HCT116 (cell line): ENCODE measurements at regions of chr17 and their contacts with region 1.

Region 1: GRCh38 chr17:71237903-71238538 is 882.8 kb upstream of the SOX9 start:
- DNase-seq: peak; percentile 57
- ATAC-seq: peak; percentile 96
- H3K4me3 ChIP-seq: no peak overlapping the region
- H3K27ac ChIP-seq: no peak overlapping the region
- H3K4me1 ChIP-seq: no peaks in the 10 kb centered on the region
- H3K27me3 ChIP-seq: no peaks in the 10 kb centered on the region
- CTCF ChIP-seq: peak; percentile 38 to 66 (median 64)
- POLR2A ChIP-seq: no peak
- RAD21 ChIP-seq: peak; percentile 89

Region 2: DNA sequence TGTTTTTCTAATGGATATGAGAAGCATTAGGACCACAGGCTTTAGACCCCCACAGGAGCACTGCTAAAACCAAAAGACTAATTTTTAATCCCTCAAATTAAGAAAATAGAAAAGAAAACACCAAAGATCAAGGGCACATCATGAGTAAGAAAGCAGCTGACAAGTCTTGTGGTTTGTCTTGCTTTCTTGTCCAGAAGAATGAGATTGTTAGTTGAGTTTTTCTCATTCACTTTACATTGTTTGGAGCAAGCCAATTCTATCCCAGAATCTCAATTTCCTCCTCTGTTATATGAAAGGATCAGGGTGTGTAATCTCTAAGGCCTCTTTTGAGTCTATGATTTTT is 169.6 kb before region 1 on chr17:
- CTCF ChIA-PET with region 1: no interaction called
- POLR2A ChIA-PET with region 1: no interaction called
- RAD21 ChIA-PET with region 1: no interaction called
- intact Hi-C with region 1: no loop called
- DNase-seq: no peak
- ATAC-seq: no peak
- H3K4me3 ChIP-seq: no peak overlapping the region
- H3K27ac ChIP-seq: no peak overlapping the region
- H3K4me1 ChIP-seq: peaks cover 6 to 22% of the 10 kb centered on the region in 2 experiments; a peak in 3 of 4 replicates
- H3K27me3 ChIP-seq: no peaks in the 10 kb centered on the region
- CTCF ChIP-seq: no peak
- POLR2A ChIP-seq: no peak
- RAD21 ChIP-seq: no peak

Region 3: DNA sequence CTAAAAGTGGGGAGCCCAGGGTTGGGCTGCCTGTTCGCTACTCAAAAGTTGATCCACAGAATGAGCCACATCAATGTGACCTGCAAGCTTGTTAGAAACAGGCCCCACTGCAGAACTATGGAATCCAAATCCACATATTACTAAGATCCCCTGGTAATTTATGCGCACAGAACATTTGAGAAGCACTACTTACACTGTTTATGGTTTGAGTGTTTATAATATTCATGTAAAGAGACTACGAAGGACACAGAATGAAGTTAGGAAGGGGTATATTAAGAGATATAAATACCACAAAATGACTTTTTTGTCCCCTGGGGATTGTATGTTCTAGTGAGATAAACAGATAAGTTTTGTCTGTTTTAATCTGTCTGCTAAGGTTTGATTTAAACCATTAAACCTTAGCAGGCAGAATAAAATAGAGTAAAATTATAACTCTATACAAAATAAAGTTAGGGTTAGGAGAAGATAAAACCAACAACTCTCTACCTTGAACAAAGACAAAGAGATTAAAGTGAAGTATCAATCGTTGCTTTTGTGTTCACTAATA is 215.9 kb after region 1 on chr17:
- CTCF ChIA-PET with region 1: no interaction called
- POLR2A ChIA-PET with region 1: no interaction called
- RAD21 ChIA-PET with region 1: interaction called in 1 of 2 experiments, 3 read pairs
- intact Hi-C with region 1: loop called (anchors 5 kb)
- DNase-seq: no peak
- ATAC-seq: no peak
- H3K4me3 ChIP-seq: no peak overlapping the region
- H3K27ac ChIP-seq: no peak overlapping the region
- H3K4me1 ChIP-seq: no peaks in the 10 kb centered on the region
- H3K27me3 ChIP-seq: no peaks in the 10 kb centered on the region
- CTCF ChIP-seq: no peak
- POLR2A ChIP-seq: no peak
- RAD21 ChIP-seq: no peak

Region 4: DNA sequence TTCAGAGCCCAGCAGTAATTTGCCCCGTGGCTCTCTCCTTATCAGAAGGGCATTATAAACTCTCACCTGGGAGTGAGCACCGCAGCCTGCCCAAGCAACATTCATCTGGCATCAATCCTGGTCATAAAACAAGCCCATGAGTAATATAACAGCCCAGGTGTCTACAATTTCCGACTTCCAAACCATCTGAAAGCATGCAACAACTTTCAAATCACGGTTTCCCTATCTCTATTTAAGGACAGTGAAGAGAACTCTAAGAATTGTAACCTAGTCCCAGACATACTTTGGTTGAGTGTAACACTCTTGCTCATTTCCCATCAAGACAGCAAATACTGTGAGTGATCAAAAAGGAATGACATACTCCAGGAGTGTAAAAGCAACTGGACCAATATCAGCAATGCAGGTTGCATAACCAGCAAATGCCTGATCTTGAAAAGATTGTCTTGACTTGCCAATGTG is 395.4 kb after region 1 on chr17:
- CTCF ChIA-PET with region 1: no interaction called
- POLR2A ChIA-PET with region 1: no interaction called
- RAD21 ChIA-PET with region 1: no interaction called
- intact Hi-C with region 1: loop called (anchors 10 kb)
- DNase-seq: peak; percentile 59
- ATAC-seq: peak; percentile 69
- H3K4me3 ChIP-seq: peak overlapping the region in 1 of 2 experiments; percentile 31; a peak in 2 of 4 replicates
- H3K27ac ChIP-seq: peak overlapping the region; percentile 51; the same call in 1 of the 2 replicates
- H3K4me1 ChIP-seq: peaks cover 38 to 51% of the 10 kb centered on the region in 2 experiments
- H3K27me3 ChIP-seq: no peaks in the 10 kb centered on the region
- CTCF ChIP-seq: 0 out of 6 replicates have a peak, but pooled peaks of 2 of the 3 experiments have one; percentile 5 to 11
- POLR2A ChIP-seq: no peak
- RAD21 ChIP-seq: no peak